ENCODE measurements at regions of chr14 and their contacts with region 1.

Region 1: GRCh38 chr14:51759950-51760349 is 100.5 kb upstream of the GNG2 start:
- DNase-seq: no peak
- H3K4me3 ChIP-seq: no peak overlapping the region
- H3K27ac ChIP-seq: no peak overlapping the region
- H3K4me1 ChIP-seq: no peaks in the 10 kb centered on the region
- H3K27me3 ChIP-seq: no peaks in the 10 kb centered on the region
- CTCF ChIP-seq: no peak
- EP300 ChIP-seq: no peak
- POLR2A ChIP-seq: no peak

Region 2: DNA sequence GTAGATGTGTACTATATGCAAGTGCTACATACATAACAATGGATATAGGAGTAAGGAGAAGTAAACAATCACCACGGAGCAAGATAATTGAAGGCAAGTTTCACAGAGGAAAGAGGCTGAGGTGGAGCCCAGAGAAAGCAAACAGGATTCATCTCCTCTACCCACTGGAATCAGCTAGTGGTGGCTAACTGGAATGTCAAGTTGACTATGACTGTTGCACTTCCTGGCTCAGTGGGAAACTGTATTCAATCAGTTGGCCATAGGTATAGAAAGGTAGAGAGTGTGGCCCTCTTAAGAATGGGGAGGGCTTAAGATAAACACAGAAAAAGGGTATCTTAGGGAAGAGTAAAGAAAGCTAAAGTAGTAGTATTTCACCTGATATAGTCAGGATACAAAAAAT is 1290.0 kb before region 1 on chr14:
- in situ Hi-C with region 1: no loop called
- intact Hi-C with region 1: loop called (anchors 10 kb)
- DNase-seq: no peak
- H3K4me3 ChIP-seq: no peak overlapping the region
- H3K27ac ChIP-seq: no peak overlapping the region
- H3K4me1 ChIP-seq: no peaks in the 10 kb centered on the region
- H3K27me3 ChIP-seq: no peaks in the 10 kb centered on the region
- CTCF ChIP-seq: no peak
- EP300 ChIP-seq: no peak
- POLR2A ChIP-seq: no peak

Region 3: DNA sequence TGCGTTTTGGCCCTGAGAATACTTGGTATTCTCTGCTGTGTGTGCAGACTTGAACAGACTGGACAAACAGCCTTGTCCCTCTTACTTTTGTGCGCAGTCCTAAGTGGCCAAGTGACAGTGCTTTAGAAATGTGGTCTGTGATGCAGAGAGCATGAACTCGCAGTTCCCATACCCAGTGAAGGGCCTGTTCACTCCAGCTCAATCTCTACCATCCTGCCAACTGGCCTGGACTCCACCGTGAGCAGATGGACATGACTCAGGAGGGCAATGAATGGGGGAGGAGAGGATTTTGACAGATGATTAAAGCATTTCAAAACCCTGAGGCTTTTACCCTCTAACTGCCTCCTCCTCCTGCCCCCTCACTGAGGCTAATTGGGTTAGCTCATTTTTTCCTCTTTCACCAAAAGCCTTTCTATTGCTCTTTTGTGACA is 753.2 kb before region 1 on chr14:
- in situ Hi-C with region 1: no loop called
- intact Hi-C with region 1: no loop called
- DNase-seq: no peak
- H3K4me3 ChIP-seq: no peak overlapping the region
- H3K27ac ChIP-seq: peak overlapping the region in 1 of 4 donors; percentile 19
- H3K4me1 ChIP-seq: peaks cover 0 to 23% (median 11%) of the 10 kb centered on the region in 4 donors
- H3K27me3 ChIP-seq: no peaks in the 10 kb centered on the region
- CTCF ChIP-seq: no peak
- EP300 ChIP-seq: no peak
- POLR2A ChIP-seq: no peak

Region 4: DNA sequence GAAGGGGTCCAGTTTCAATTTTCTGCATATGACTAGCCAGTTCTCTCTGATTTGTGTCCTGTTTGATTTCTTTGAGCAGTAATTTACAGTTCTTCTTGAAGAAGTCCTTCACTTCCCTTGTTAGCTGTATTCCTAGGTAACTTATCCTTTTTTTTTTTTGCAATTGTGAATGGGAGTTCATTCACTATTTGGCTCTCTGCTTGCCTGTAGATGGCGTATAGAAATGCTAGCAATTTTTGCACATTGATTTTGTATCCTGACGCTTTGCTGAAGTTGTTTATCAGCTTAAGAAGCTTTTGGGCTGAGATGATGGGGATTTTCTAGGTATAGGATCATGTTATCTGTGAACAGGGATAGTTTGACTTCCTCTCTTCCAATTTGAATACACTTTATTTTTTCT is 386.6 kb after region 1 on chr14:
- in situ Hi-C with region 1: no loop called
- intact Hi-C with region 1: no loop called
- DNase-seq: no peak
- H3K4me3 ChIP-seq: no peak overlapping the region
- H3K27ac ChIP-seq: no peak overlapping the region
- H3K4me1 ChIP-seq: no peaks in the 10 kb centered on the region
- H3K27me3 ChIP-seq: no peaks in the 10 kb centered on the region
- CTCF ChIP-seq: peak in 1 of 5 experiments; percentile 8
- EP300 ChIP-seq: no peak
- POLR2A ChIP-seq: no peak